ENCODE measurements at regions of chr13 and their contacts with region 1.

Region 1: GRCh38 chr13:99356158-99357091 is 49.2 kb upstream of the GPR183 start:
- DNase-seq: peak; percentile 51 to 94
- ATAC-seq: peak; percentile 61 to 79 (median 77)
- H3K4me3 ChIP-seq: no peak overlapping the region
- H3K4me3 Mint-ChIP-seq: peak overlapping the region; percentile 81
- H3K27ac ChIP-seq: peak overlapping the region; percentile 99
- H3K27ac Mint-ChIP-seq: peak overlapping the region; percentile 89 to 91
- H3K4me1 ChIP-seq: peaks cover 88% of the 10 kb centered on the region
- H3K4me1 Mint-ChIP-seq: peaks cover 89% of the 10 kb centered on the region in 2 donors
- H3K27me3 ChIP-seq: no peaks in the 10 kb centered on the region
- H3K27me3 Mint-ChIP-seq: no peaks in the 10 kb centered on the region
- CTCF ChIP-seq: no peak

Region 2: DNA sequence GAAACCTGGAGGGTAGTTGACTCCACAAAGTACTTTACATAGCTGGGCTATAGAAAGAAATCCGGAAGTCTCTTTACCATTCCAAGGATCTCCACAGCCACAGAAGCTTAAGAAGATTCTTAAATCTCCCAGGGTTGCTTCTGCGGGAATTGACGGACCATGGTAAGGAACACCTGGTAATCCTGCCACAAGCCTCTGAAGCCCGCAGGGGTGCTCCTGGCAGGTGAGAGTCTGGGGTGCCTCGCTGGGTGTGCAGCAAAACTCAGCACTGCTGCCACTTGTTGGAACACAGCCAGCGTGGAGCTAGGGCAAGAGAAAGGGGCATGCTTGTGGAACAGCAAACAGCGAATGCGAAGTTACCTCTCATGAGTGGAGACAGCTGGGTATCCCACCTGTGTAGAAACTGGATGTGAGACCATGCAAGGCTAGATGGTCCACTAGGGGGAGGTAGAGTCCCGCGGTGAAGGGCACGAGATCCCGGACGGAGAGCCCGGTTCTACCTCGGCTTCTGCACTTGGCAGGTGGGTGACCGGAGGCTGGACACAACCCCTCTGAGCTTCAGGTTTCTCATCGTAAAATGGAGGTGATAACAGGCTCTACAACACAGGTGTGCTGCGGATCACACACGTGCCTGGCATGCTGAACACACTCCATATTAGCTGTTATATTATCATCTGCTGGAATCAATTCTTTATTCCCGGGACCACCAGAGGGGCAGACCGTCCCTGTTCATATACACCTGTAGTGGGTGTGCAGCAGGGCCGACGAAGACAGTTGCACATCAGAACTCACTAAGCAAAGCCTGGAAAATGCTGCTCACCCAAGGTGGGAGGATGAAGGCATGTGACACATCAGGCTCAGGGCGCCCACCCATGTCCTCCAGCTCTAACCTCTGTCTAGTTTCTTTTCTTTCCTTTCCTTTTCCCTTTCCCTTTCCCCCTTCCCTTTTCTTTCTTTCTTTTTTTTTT is 179.8 kb before region 1 on chr13:
- intact Hi-C with region 1: loop called (anchors 10 kb)
- DNase-seq: peak; percentile 70 to 91
- ATAC-seq: peak; percentile 90 to 99 (median 98)
- H3K4me3 ChIP-seq: no peak overlapping the region
- H3K4me3 Mint-ChIP-seq: no peak overlapping the region
- H3K27ac ChIP-seq: no peak overlapping the region
- H3K27ac Mint-ChIP-seq: no peak overlapping the region
- H3K4me1 ChIP-seq: peaks cover 28% of the 10 kb centered on the region
- H3K4me1 Mint-ChIP-seq: peaks cover 6 to 7% of the 10 kb centered on the region in 2 donors
- H3K27me3 ChIP-seq: peaks cover 3% of the 10 kb centered on the region
- H3K27me3 Mint-ChIP-seq: peaks cover 21 to 43% of the 10 kb centered on the region in 2 donors
- CTCF ChIP-seq: peak; percentile 86

Region 3: GRCh38 chr13:99218969-99219368 is 137.5 kb before region 1 on chr13:
- intact Hi-C with region 1: loop called (anchors 2 kb)
- DNase-seq: peak; percentile 52 to 90
- ATAC-seq: peak; percentile 70 to 83 (median 81)
- H3K4me3 ChIP-seq: no peak overlapping the region
- H3K4me3 Mint-ChIP-seq: peak overlapping the region; percentile 86
- H3K27ac ChIP-seq: peak overlapping the region; percentile 74
- H3K27ac Mint-ChIP-seq: peak overlapping the region; percentile 83 to 89
- H3K4me1 ChIP-seq: peaks cover 64% of the 10 kb centered on the region
- H3K4me1 Mint-ChIP-seq: peaks cover 86% of the 10 kb centered on the region in 2 donors
- H3K27me3 ChIP-seq: no peaks in the 10 kb centered on the region
- H3K27me3 Mint-ChIP-seq: no peaks in the 10 kb centered on the region
- CTCF ChIP-seq: no peak

Region 4: DNA sequence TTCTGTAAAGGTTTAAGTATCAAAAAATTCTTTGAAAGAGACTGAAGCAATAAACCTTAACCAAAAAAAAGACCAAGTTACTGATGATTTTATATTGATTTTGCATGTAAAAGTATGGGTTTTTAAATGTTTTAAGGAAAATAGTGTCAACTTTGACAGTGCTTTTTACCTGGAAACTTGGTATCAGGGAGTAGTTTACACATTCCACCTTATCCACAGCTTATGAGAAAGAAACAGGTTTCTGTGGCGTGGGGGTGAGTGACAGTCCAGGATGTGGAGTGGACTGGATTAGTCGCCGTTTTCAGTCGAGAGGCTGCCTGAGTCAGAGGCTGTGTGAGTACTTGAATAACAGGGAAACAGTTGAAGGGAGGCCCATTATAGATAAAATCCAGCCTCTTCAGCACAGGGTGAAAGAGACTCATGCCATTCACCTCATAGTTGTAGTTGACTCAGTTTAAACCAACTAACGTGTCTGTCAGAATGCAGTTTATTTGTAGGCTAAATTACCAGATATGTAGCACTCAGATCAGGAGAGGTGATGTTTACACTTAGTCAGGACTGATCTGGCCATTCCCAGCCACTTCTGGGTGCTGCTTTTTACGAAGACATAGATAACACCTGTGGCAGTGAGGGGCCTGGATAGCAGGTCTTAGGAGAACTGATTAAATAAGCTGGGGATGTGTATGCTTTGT is 48.6 kb before region 1 on chr13:
- intact Hi-C with region 1: loop called (anchors 5 kb)
- DNase-seq: peak in 1 of 2 donors; percentile 61
- ATAC-seq: peak; percentile 52 to 74 (median 70)
- H3K4me3 ChIP-seq: peak overlapping the region; percentile 40
- H3K4me3 Mint-ChIP-seq: peak overlapping the region; percentile 50
- H3K27ac ChIP-seq: peak overlapping the region; percentile 69
- H3K27ac Mint-ChIP-seq: peak overlapping the region; percentile 61 to 64
- H3K4me1 ChIP-seq: peaks cover 33% of the 10 kb centered on the region
- H3K4me1 Mint-ChIP-seq: peaks cover 49 to 67% of the 10 kb centered on the region in 2 donors
- H3K27me3 ChIP-seq: no peaks in the 10 kb centered on the region
- H3K27me3 Mint-ChIP-seq: no peaks in the 10 kb centered on the region
- CTCF ChIP-seq: no peak

Region 5: GRCh38 chr13:99335603-99336002 is 20.8 kb before region 1 on chr13:
- intact Hi-C with region 1: loop called (anchors 1 kb)
- DNase-seq: no peak
- ATAC-seq: no peak
- H3K4me3 ChIP-seq: no peak overlapping the region
- H3K4me3 Mint-ChIP-seq: no peak overlapping the region
- H3K27ac ChIP-seq: no peak overlapping the region
- H3K27ac Mint-ChIP-seq: no peak overlapping the region
- H3K4me1 ChIP-seq: peaks cover 27% of the 10 kb centered on the region
- H3K4me1 Mint-ChIP-seq: peaks cover 39 to 44% of the 10 kb centered on the region in 2 donors
- H3K27me3 ChIP-seq: no peaks in the 10 kb centered on the region
- H3K27me3 Mint-ChIP-seq: peaks cover 2 to 10% of the 10 kb centered on the region in 2 donors
- CTCF ChIP-seq: no peak

Region 6: DNA sequence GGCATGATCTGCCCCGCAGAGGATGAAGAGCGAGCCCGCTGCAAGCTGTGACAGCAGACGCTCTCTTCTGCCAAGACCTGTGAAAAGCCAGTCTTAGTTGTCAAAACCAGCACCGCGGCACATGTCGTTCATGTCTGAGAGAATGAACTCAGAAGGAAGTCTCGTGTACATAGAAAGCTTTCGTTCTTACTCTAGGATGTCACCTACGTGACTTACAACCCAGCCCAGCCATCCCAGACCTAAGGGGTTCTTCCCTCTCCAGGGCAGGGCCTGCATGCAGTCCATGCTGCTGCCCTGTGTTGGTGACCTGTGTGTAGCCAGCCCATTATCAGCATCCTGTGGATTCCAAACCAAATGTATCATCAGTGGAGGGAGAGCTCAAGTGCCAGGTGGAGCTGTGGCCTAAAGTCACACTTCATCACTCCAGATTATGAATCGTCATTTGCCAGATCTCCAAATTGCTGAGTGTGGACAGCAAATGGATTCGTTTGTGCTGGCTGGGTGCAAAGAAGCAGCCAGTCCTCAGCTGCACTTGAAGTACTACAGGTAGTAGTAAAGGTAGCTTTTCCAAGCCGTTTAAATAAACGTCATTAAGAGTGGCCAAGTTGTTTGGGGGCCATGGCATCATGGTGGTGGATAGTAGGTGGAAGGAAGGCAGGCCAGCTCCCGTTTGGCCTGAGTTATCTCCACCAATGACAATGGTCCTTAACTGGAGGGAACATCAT is 24.7 kb after region 1 on chr13:
- intact Hi-C with region 1: loop called (anchors 1 kb)
- DNase-seq: peak; percentile 55 to 80
- ATAC-seq: peak; percentile 79 to 91 (median 91)
- H3K4me3 ChIP-seq: no peak overlapping the region
- H3K4me3 Mint-ChIP-seq: peak overlapping the region; percentile 75
- H3K27ac ChIP-seq: peak overlapping the region; percentile 63
- H3K27ac Mint-ChIP-seq: peak overlapping the region; percentile 87 to 88
- H3K4me1 ChIP-seq: peaks cover 87% of the 10 kb centered on the region
- H3K4me1 Mint-ChIP-seq: peaks cover 49 to 58% of the 10 kb centered on the region in 2 donors
- H3K27me3 ChIP-seq: no peaks in the 10 kb centered on the region
- H3K27me3 Mint-ChIP-seq: peaks cover 0 to 3% of the 10 kb centered on the region in 2 donors
- CTCF ChIP-seq: no peak

Region 7: GRCh38 chr13:99403458-99403971 is 47.1 kb after region 1 on chr13:
- intact Hi-C with region 1: loop called (anchors 2 kb)
- DNase-seq: peak; percentile 57 to 68
- ATAC-seq: peak; percentile 87 to 94 (median 92)
- H3K4me3 ChIP-seq: no peak overlapping the region
- H3K4me3 Mint-ChIP-seq: peak overlapping the region; percentile 72
- H3K27ac ChIP-seq: no peak overlapping the region
- H3K27ac Mint-ChIP-seq: peak overlapping the region; percentile 91 to 94
- H3K4me1 ChIP-seq: peaks cover 20% of the 10 kb centered on the region
- H3K4me1 Mint-ChIP-seq: peaks cover 13 to 26% of the 10 kb centered on the region in 2 donors
- H3K27me3 ChIP-seq: no peaks in the 10 kb centered on the region
- H3K27me3 Mint-ChIP-seq: peaks cover 41 to 44% of the 10 kb centered on the region in 2 donors
- CTCF ChIP-seq: no peak

Region 8: DNA sequence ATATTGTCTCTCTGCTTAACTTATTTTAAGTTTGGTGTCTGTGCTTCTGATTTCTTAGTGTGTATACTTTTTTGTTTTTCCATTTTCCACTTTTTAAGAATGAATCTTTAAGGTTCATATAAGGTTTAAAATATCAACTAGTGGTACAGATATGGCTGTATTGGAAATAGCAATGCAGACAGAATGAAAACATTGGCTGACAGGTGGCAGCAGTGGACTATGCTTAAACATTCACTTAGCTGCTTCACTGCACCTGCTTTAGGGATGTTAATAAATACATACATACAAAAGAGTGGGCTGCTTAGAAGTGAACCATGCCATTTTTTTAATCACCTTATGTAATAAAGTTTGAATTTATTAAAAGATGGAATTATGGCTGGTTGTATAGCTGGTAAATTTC is 172.1 kb after region 1 on chr13:
- intact Hi-C with region 1: no loop called
- DNase-seq: peak in 1 of 2 donors; percentile 68
- ATAC-seq: peak in 1 of 3 donors; percentile 43
- H3K4me3 ChIP-seq: no peak overlapping the region
- H3K4me3 Mint-ChIP-seq: no peak overlapping the region
- H3K27ac ChIP-seq: no peak overlapping the region
- H3K27ac Mint-ChIP-seq: peak overlapping the region in 1 of 2 donors; percentile 6
- H3K4me1 ChIP-seq: peaks cover 4% of the 10 kb centered on the region
- H3K4me1 Mint-ChIP-seq: peaks cover 36 to 39% of the 10 kb centered on the region in 2 donors
- H3K27me3 ChIP-seq: no peaks in the 10 kb centered on the region
- H3K27me3 Mint-ChIP-seq: no peaks in the 10 kb centered on the region
- CTCF ChIP-seq: no peak

Region 9: GRCh38 chr13:100315522-100315921 is 959.1 kb after region 1 on chr13:
- intact Hi-C with region 1: no loop called
- DNase-seq: no peak
- ATAC-seq: no peak
- H3K4me3 ChIP-seq: no peak overlapping the region
- H3K4me3 Mint-ChIP-seq: no peak overlapping the region
- H3K27ac ChIP-seq: no peak overlapping the region
- H3K27ac Mint-ChIP-seq: no peak overlapping the region
- H3K4me1 ChIP-seq: no peaks in the 10 kb centered on the region
- H3K4me1 Mint-ChIP-seq: no peaks in the 10 kb centered on the region
- H3K27me3 ChIP-seq: no peaks in the 10 kb centered on the region
- H3K27me3 Mint-ChIP-seq: no peaks in the 10 kb centered on the region
- CTCF ChIP-seq: no peak

Measured in natural killer cell (primary cell).